Caco-2 (cell line): ENCODE measurements at regions of chr17 and their contacts with region 1.

Region 1: DNA sequence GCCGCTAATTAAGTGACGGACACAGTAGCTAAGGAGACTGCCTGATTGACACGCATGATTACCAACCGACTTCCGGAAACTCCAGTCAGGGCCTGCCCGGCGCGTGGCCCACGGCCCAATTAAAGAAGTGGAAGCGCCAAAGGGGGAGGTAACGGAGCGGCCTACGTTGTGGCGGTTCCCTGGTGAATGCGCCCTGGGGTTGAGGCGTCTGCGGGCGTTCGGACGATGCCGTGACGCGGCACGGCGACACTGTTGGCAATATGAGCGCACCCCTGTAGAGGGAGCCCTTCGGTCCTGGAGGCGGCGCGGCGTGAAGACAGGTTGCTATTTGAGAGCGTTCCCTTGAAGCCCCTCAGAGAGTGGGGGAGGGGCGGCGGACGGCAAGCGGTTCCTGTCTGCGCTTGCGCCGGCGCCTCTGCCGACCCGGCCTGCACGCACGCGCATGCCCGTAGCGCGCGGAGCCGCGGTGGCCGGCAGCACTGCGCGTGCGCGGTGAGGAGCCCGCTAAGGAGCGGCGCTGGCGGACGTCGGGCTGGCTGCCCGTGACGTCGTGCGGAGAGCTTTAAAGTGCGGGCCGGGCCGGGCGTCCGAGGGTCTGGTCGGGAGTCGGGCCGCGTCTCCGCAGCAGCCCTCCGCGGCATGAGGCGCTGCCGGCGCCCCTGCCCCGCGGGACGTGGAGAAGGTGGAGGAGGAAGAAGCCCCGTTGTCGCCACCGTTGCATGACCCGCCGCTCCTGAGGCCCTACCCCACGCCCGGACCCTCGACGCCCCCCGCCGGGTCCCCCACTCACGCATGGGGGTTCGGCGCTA is at the start of gene ALKBH5:
- DNase-seq: peak; percentile 99 to 100
- H3K4me3 ChIP-seq: peak within 1 kb of the TSS; percentile 75
- H3K4me3 Mint-ChIP-seq: peak within 1 kb of the TSS; percentile 85
- H3K27ac Mint-ChIP-seq: peak within 1 kb of the TSS; percentile 98
- H3K4me1 ChIP-seq: peaks cover 30% of the 10 kb centered on the region
- H3K4me1 Mint-ChIP-seq: peaks cover 26% of the 10 kb centered on the region
- H3K27me3 ChIP-seq: no peaks in the 10 kb centered on the region
- H3K27me3 Mint-ChIP-seq: no peaks in the 10 kb centered on the region
- CTCF ChIP-seq: peak; percentile 48 to 58
- total RNA-seq, gene ALKBH5: 99.0 and 101 TPM in 2 replicates

Region 2: DNA sequence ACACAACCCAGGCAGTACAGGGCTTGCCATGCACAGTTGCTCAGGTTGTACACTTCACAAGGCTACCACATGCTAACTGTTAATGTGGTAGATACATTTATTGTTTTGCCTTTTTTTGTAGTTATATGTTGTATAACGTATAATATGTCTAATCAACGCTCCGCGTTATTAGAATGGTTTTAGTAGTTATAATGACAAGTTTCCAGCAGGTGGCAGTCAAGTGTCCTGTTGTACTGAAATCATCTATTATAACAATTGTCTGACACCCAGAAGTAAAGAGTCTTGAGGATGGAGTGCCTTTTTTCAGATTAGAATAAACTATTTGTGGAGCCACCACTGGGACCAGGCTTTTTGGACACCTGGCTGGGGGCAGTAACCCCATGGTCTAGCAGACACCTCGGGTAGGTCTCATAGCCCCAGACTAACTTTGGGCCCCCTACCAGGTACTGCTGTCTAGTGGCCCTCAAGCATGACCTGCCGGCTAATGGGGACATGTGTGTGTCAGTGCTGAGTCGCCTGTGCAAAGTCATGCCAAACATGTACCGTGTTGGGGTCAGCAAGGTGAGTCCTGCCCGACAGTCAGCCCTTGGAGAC is 42.2 kb before region 1 on chr17:
- CTCF ChIA-PET with region 1: interaction called, 8 read pairs
- POLR2A ChIA-PET with region 1: no interaction called
- intact Hi-C with region 1: loop called (anchors 2 kb)
- DNase-seq: peak in 1 of 2 experiments; percentile 62
- H3K4me3 ChIP-seq: no peak overlapping the region
- H3K4me3 Mint-ChIP-seq: no peak overlapping the region
- H3K27ac Mint-ChIP-seq: no peak overlapping the region
- H3K4me1 ChIP-seq: peaks cover 5% of the 10 kb centered on the region
- H3K4me1 Mint-ChIP-seq: peaks cover 14% of the 10 kb centered on the region
- H3K27me3 ChIP-seq: no peaks in the 10 kb centered on the region
- H3K27me3 Mint-ChIP-seq: no peaks in the 10 kb centered on the region
- CTCF ChIP-seq: peak; percentile 55 to 73

Region 3: DNA sequence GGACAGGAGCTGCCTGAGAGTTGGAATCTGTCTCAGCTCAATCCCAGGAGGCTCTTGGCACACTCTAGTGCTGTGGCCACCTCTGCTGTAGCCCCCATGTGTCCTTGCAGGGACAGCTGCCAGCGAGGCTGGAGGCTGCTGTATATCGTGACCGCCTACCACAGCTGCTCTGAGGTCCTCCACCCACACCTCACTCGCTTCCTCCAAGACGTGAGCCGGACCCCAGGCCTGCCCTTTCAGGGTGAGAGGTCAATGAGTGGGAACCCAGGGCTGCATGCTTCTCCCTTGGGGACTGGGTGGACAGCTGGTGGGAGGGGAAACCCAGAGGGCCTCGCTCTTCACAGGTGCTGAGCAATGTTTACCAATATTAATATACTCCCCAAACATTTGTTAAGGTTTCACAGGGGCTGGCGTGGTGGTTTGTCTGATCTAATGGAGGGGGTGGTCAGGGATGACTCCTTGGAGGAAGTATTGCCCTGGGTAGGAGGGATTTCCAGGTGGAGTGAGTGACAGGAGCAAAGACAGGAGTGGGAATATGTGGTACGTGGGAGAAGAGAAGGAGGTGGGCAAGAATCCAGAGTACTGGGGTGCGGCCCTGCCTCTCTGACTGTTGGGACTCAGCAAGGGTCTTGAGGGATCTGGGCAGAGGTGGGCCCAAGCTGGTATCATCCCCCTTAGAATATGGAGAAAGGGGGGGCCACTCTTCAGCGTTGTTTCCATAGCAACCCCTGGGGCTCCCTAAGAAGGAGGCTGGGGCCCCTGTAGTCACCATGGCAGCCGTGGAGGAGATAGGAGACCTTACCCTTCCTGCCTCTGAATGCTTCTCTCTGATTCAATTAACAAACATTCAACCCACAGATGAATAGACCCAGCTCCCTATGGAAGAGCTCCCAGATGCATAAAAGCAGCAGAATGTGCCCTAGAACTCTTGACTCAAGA is 22.1 kb before region 1 on chr17:
- CTCF ChIA-PET with region 1: no interaction called
- POLR2A ChIA-PET with region 1: no interaction called
- intact Hi-C with region 1: no loop called
- DNase-seq: no peak
- H3K4me3 ChIP-seq: no peak overlapping the region
- H3K4me3 Mint-ChIP-seq: no peak overlapping the region
- H3K27ac Mint-ChIP-seq: no peak overlapping the region
- H3K4me1 ChIP-seq: peaks cover 9% of the 10 kb centered on the region
- H3K4me1 Mint-ChIP-seq: peaks cover 17% of the 10 kb centered on the region
- H3K27me3 ChIP-seq: no peaks in the 10 kb centered on the region
- H3K27me3 Mint-ChIP-seq: no peaks in the 10 kb centered on the region
- CTCF ChIP-seq: no peak

Region 4: GRCh38 chr17:18225121-18225566 is 41.6 kb after region 1 on chr17:
- CTCF ChIA-PET with region 1: no interaction called
- POLR2A ChIA-PET with region 1: interaction called, 3 read pairs
- intact Hi-C with region 1: loop called (anchors 2 kb)
- DNase-seq: peak; percentile 96 to 99
- H3K4me3 ChIP-seq: peak overlapping the region; percentile 32
- H3K4me3 Mint-ChIP-seq: peak overlapping the region; percentile 99
- H3K27ac Mint-ChIP-seq: peak overlapping the region; percentile 80
- H3K4me1 ChIP-seq: peaks cover 21% of the 10 kb centered on the region
- H3K4me1 Mint-ChIP-seq: peaks cover 21% of the 10 kb centered on the region
- H3K27me3 ChIP-seq: no peaks in the 10 kb centered on the region
- H3K27me3 Mint-ChIP-seq: no peaks in the 10 kb centered on the region
- CTCF ChIP-seq: no peak

Region 5: DNA sequence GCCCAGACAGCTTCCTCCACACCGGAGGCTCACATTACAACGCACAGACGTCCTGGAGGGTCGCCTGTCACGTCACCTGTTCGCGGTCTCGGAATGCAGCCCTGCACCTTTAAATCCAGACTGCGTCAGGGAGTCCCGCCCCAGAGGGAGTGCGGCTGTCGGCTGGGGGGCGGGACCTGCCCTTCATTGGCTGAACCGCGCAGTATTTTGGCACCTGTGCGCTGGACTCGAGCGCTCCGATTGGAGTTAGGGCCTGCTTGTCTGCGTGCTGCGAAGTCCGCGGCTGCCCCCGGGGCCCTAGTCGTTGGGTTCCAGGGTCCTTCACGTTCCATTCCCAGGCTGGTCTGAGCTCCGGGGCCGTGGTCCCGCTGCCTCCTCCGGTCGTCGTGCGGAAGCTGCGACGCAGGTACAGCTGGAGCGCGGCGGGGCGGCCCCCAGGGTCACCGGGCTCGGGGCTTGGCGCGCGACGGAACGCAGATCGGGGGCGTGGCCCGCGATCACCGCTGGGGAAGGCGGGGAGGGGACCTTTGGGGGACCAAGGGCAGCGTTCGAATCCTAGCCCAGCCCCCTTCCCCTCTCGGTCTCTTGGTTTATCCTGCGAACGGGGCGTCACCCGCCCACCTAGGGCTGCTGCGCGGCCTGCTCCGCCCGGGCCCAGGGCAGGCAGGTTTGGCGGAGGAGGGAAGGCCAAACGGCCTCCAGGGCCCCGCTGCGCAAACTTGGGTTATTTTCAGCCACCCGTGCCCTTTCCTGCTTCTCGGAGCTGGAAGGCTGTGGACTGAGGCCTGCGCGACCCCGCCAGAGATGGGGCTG is 77.0 kb after region 1 on chr17 and contains the start of gene MIEF2:
- CTCF ChIA-PET with region 1: no interaction called
- POLR2A ChIA-PET with region 1: no interaction called
- intact Hi-C with region 1: loop called (anchors 5 kb)
- DNase-seq: peak; percentile 97 to 98
- H3K4me3 ChIP-seq: peak within 1 kb of the TSS; percentile 87
- H3K4me3 Mint-ChIP-seq: peak within 1 kb of the TSS; percentile 80
- H3K27ac Mint-ChIP-seq: peak within 1 kb of the TSS; percentile 96
- H3K4me1 ChIP-seq: peaks cover 31% of the 10 kb centered on the region
- H3K4me1 Mint-ChIP-seq: peaks cover 4% of the 10 kb centered on the region
- H3K27me3 ChIP-seq: no peaks in the 10 kb centered on the region
- H3K27me3 Mint-ChIP-seq: no peaks in the 10 kb centered on the region
- CTCF ChIP-seq: no peak
- total RNA-seq, gene MIEF2: 22.3 and 22.8 TPM in 2 replicates

Region 6: DNA sequence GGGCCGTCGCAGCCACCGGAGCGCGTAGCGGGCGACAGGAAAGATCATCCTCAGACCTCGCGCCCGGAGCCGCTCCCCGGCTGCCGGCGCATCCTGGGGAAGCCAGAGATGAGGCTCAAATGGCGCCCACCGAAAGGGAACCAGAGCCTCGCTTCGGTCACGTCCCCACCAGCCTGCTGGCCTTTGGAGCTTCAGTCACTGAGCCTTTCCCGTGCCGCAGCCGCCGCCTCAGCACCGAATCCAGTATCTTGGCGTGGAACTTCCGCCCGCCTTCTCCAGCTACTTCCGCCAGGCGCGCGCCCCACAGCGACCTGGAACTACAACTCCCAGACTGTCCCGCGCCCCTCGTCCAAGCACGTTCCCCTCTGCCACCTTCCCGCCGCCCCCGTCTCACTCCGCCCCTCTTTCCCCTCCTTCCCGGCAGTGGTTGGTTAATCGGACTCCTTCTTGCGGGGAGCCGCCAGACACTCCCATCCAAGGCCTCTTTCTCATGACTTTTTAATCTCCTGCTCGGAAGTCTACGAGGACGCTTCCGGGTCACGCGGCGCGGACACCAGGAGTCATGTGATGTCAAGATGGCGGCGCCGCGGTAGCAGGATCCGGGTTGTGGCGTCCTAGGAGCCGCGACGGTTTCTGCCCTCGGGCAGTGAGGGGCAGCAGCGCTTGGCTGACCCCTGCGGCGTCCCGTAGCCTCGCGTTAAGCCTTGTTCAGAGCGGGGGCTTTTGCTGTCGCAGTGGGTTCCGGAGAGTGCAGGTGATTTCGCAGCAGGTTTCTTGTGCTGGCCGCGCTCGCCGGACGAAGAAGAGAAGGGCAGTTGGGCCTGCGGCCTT is 131.4 kb after region 1 on chr17 and contains the starts of genes SMCR8 and TOP3A:
- CTCF ChIA-PET with region 1: interaction called, 4 read pairs
- POLR2A ChIA-PET with region 1: interaction called, 4 read pairs
- intact Hi-C with region 1: loop called (anchors 2 kb)
- DNase-seq: peak; percentile 98 to 99
- H3K4me3 ChIP-seq: peak within 1 kb of the TSS; percentile 86
- H3K4me3 Mint-ChIP-seq: peak within 1 kb of the TSS; percentile 89
- H3K27ac Mint-ChIP-seq: peak within 1 kb of the TSS; percentile 97
- H3K4me1 ChIP-seq: peaks cover 12% of the 10 kb centered on the region
- H3K4me1 Mint-ChIP-seq: peaks cover 16% of the 10 kb centered on the region
- H3K27me3 ChIP-seq: no peaks in the 10 kb centered on the region
- H3K27me3 Mint-ChIP-seq: no peaks in the 10 kb centered on the region
- CTCF ChIP-seq: no peak
- total RNA-seq, gene SMCR8: 28.4 TPM in 2 replicates
- total RNA-seq, gene TOP3A: 73.7 and 81.1 TPM in 2 replicates

Region 7: DNA sequence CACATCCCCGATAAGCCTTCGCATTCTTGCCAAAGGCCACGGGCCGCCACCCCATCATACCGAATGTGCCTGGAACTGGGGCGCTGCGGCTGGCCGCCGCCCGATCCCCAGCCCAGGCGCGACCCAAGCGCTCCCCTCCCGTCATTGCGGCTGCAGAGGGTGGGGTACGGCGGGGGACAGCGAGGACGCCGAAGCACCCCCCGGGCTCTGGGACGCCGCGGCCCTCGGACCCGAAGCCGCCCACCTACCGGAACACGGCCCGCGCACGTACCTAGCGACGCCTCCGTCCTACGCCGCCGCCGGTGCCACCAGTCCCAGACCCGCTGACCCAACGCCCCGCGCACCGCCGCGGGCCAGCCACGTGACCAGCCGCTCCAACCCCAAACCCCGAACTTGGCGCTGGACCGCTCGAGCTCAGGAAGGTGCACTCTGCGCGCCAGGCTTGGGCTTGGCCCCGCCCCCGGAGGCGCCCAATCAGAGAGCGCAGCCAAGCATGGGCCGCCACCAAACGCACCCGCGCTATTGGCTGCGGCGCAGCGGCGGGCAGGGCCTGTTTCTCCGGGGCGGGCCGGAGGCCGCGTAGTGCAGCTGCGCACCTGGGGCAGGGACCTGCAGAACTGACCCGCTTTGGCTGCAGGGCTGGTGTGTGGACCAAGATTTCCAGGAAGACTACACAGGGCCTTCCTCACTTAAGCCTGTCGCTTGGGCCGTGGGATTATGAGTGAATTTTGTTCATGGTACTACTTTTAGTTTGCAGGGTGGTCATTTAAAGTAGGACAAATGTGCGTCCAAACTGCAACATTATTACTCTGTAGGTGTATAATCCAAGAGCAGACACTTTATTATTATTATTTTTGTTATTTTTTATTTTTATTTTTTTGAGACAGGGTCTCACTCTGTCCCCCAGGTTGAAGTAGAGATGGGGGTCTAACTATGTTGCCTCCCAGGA is 179.8 kb after region 1 on chr17 and contains the start of gene SHMT1:
- CTCF ChIA-PET with region 1: no interaction called
- POLR2A ChIA-PET with region 1: no interaction called
- intact Hi-C with region 1: loop called (anchors 5 kb)
- DNase-seq: peak; percentile 96 to 98
- H3K4me3 ChIP-seq: peak within 1 kb of the TSS; percentile 99
- H3K4me3 Mint-ChIP-seq: peak within 1 kb of the TSS; percentile 81
- H3K27ac Mint-ChIP-seq: peak within 1 kb of the TSS; percentile 45
- H3K4me1 ChIP-seq: 0 out of 2 replicates have a peak, but pooled peaks cover 4% of the 10 kb centered on the region
- H3K4me1 Mint-ChIP-seq: peaks cover 7% of the 10 kb centered on the region
- H3K27me3 ChIP-seq: no peaks in the 10 kb centered on the region; the same call in 1 of the 2 replicates
- H3K27me3 Mint-ChIP-seq: no peaks in the 10 kb centered on the region
- CTCF ChIP-seq: no peak
- total RNA-seq, gene SHMT1: 69.4 and 72.4 TPM in 2 replicates